T-cell (primary cell): ENCODE measurements at regions of chr5 and their contacts with region 1.

Region 1: DNA sequence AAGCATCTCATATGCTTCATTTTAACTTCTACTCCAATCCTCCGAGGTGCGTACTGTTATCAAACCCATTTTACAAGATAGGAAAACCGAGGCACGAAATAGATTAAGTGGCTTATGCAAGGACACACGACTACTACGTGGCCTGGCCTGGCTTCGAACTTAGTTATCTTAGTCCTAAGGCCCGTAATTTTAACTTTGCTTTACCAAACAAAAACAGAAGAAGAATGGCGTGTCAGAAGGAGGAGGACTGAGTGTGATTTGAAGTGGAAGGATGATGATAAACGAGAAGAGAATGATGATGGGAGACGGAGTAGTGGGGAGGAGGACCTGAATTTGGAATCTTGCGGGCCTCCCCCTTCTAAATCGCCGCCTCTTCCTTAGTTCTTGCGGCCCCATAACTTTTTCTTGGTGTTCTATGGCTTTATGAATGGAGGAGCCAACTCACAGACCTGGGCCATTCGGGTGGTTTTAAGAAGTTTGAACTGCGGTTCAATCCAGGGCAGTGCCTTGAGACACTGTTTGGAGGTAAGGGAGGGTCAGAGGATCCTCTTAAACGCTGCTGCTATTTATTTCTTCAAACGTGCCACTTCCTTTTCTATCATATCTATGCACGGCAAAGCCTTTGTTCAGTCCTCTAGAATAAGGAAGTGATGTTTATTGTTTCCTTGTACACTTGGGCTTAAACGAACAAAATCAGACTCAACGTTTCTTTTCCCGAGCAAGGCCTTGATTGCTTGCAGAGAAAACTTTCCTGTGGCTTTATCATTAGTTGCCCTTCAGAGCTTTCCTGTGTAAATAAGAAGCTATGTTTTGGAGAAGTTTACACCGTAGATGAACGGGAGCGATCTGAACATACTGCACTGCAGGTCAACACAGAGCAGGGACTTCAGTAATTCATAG is 795 bp downstream of the CNOT8 start:
- DNase-seq: peak in 11 of 35 experiments; percentile 2 to 47 (median 10)
- ATAC-seq: no peak
- H3K4me3 ChIP-seq: peak overlapping the region; percentile 59 to 81
- H3K4me3 Mint-ChIP-seq: peak overlapping the region; percentile 88 to 95 (median 93)
- H3K27ac ChIP-seq: peak overlapping the region; percentile 90
- H3K27ac Mint-ChIP-seq: peak overlapping the region; percentile 94 to 99
- H3K4me1 ChIP-seq: peaks cover 30 to 35% of the 10 kb centered on the region in 2 experiments
- H3K4me1 Mint-ChIP-seq: peaks cover 49 to 57% (median 51%) of the 10 kb centered on the region in 3 donors
- H3K27me3 ChIP-seq: no peaks in the 10 kb centered on the region
- H3K27me3 Mint-ChIP-seq: no peaks in the 10 kb centered on the region

Region 2: GRCh38 chr5:154878642-154879335 is 19.6 kb after region 1 on chr5:
- CTCF ChIA-PET with region 1: no interaction called
- POLR2A ChIA-PET with region 1: interaction called in 1 of 2 experiments, 10 read pairs
- DNase-seq: no peak
- ATAC-seq: no peak
- H3K4me3 ChIP-seq: no peak overlapping the region
- H3K4me3 Mint-ChIP-seq: no peak overlapping the region
- H3K27ac ChIP-seq: no peak overlapping the region
- H3K27ac Mint-ChIP-seq: no peak overlapping the region
- H3K4me1 ChIP-seq: no peaks in the 10 kb centered on the region
- H3K4me1 Mint-ChIP-seq: no peaks in the 10 kb centered on the region
- H3K27me3 ChIP-seq: no peaks in the 10 kb centered on the region
- H3K27me3 Mint-ChIP-seq: no peaks in the 10 kb centered on the region

Region 3: DNA sequence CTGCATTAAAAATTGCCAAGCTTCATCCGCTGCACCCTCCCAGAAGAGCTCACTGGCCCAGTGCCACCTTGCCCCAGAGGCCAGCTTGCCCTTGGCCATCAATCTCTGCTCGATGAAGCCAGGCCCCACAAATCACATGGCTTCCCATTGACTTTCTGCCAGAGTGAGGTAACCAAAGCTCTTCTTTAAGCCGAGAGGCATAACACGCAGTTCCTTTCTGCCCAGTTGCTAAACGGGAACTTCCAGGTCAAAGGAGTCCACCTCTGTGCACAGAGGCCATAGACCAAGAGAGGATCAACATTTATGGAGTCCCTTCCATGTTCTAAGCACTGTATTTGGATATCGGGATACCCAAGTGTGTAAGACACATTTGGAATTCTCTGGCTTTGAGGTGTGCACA is 363.2 kb after region 1 on chr5:
- CTCF ChIA-PET with region 1: no interaction called
- POLR2A ChIA-PET with region 1: no interaction called
- DNase-seq: no peak
- ATAC-seq: no peak
- H3K4me3 ChIP-seq: no peak overlapping the region
- H3K4me3 Mint-ChIP-seq: no peak overlapping the region
- H3K27ac ChIP-seq: no peak overlapping the region
- H3K27ac Mint-ChIP-seq: no peak overlapping the region
- H3K4me1 ChIP-seq: no peaks in the 10 kb centered on the region
- H3K4me1 Mint-ChIP-seq: no peaks in the 10 kb centered on the region
- H3K27me3 ChIP-seq: no peaks in the 10 kb centered on the region
- H3K27me3 Mint-ChIP-seq: peaks cover 6 to 8% of the 10 kb centered on the region in 2 donors